Caco-2 (cell line): ENCODE measurements at regions of chr2 and their contacts with region 1.

Region 1: GRCh38 chr2:84314901-84315330 is 144.2 kb downstream of the SUCLG1 start:
- DNase-seq: peak; percentile 88 to 91
- H3K4me3 ChIP-seq: no peak overlapping the region
- H3K4me3 Mint-ChIP-seq: no peak overlapping the region
- H3K27ac Mint-ChIP-seq: no peak overlapping the region
- H3K4me1 ChIP-seq: no peaks in the 10 kb centered on the region
- H3K4me1 Mint-ChIP-seq: peaks cover 7% of the 10 kb centered on the region
- H3K27me3 ChIP-seq: no peaks in the 10 kb centered on the region; the same call in 1 of the 2 replicates
- H3K27me3 Mint-ChIP-seq: no peaks in the 10 kb centered on the region
- CTCF ChIP-seq: peak; percentile 95 to 97

Region 2: DNA sequence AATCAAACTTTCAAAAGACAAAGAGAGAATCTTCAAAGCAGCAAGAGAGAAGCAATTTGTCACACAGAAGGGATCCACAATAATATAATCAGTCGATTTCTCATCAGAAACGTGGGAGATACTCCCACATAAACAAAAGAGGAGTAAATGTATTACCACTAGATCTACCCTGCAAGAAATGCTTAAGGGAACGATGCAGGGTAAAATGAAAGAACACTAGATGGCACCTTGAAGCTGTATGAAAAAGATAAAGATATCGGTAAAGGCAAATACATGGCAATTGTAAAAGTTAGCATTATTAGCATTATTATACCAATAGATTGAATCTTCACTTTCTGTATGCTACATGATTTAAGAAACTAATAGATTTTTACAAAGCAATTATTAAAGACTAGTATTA is 532.8 kb before region 1 on chr2:
- CTCF ChIA-PET with region 1: interaction called, 4 read pairs
- POLR2A ChIA-PET with region 1: no interaction called
- intact Hi-C with region 1: loop called (anchors 1 kb)
- DNase-seq: no peak
- H3K4me3 ChIP-seq: no peak overlapping the region
- H3K4me3 Mint-ChIP-seq: no peak overlapping the region
- H3K27ac Mint-ChIP-seq: no peak overlapping the region
- H3K4me1 ChIP-seq: no peaks in the 10 kb centered on the region
- H3K4me1 Mint-ChIP-seq: no peaks in the 10 kb centered on the region
- H3K27me3 ChIP-seq: no peaks in the 10 kb centered on the region
- H3K27me3 Mint-ChIP-seq: peaks cover 3% of the 10 kb centered on the region
- CTCF ChIP-seq: no peak

Region 3: GRCh38 chr2:84152462-84152861 is 162.5 kb before region 1 on chr2:
- CTCF ChIA-PET with region 1: no interaction called
- POLR2A ChIA-PET with region 1: no interaction called
- intact Hi-C with region 1: loop called (anchors 5 kb)
- DNase-seq: no peak
- H3K4me3 ChIP-seq: no peak overlapping the region
- H3K4me3 Mint-ChIP-seq: no peak overlapping the region
- H3K27ac Mint-ChIP-seq: no peak overlapping the region
- H3K4me1 ChIP-seq: no peaks in the 10 kb centered on the region
- H3K4me1 Mint-ChIP-seq: no peaks in the 10 kb centered on the region
- H3K27me3 ChIP-seq: no peaks in the 10 kb centered on the region
- H3K27me3 Mint-ChIP-seq: peaks cover 2% of the 10 kb centered on the region
- CTCF ChIP-seq: no peak

Region 4: DNA sequence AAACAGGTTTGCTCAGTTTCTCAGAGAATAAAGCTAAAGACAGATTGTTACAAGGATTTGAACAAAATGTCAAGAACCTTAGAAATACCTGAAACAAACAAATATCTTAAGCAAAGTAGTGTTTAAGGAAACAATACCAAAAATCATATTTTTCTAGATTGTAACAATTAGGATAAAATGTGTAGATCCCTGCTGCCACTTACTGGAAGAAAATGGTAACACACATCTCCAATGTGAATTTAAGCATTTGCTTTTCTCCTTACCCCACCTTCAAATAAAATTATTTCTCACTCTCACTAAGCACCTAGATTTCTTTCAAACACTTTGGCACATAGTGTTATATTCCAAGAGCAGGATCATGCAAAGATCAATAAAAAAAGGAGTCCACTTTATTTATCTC is 109.2 kb after region 1 on chr2:
- CTCF ChIA-PET with region 1: no interaction called
- POLR2A ChIA-PET with region 1: no interaction called
- intact Hi-C with region 1: loop called (anchors 1 kb)
- DNase-seq: no peak
- H3K4me3 ChIP-seq: no peak overlapping the region
- H3K4me3 Mint-ChIP-seq: no peak overlapping the region
- H3K27ac Mint-ChIP-seq: no peak overlapping the region
- H3K4me1 ChIP-seq: no peaks in the 10 kb centered on the region
- H3K4me1 Mint-ChIP-seq: no peaks in the 10 kb centered on the region
- H3K27me3 ChIP-seq: no peaks in the 10 kb centered on the region
- H3K27me3 Mint-ChIP-seq: no peaks in the 10 kb centered on the region
- CTCF ChIP-seq: peak; percentile 41 to 43